B cell (primary cell): ENCODE measurements at regions of chr1 and their contacts with region 1.

Region 1: GRCh38 chr1:223712194-223712849 is at the start of gene CAPN2:
- DNase-seq: peak; percentile 73
- ATAC-seq: peak; percentile 72
- H3K4me3 ChIP-seq: peak within 1 kb of the TSS; percentile 23 to 87 (median 67)
- H3K4me3 Mint-ChIP-seq: peak within 1 kb of the TSS; percentile 88
- H3K27ac ChIP-seq: peak within 1 kb of the TSS; percentile 42 to 68
- H3K27ac Mint-ChIP-seq: peak within 1 kb of the TSS; percentile 84
- H3K4me1 ChIP-seq: peaks cover 47 to 53% of the 10 kb centered on the region in 2 donors
- H3K4me1 Mint-ChIP-seq: peaks cover 51% of the 10 kb centered on the region
- H3K27me3 ChIP-seq: no peaks in the 10 kb centered on the region
- H3K27me3 Mint-ChIP-seq: no peaks in the 10 kb centered on the region
- CTCF ChIP-seq: no peak
- total RNA-seq, gene CAPN2: 79.6 and 83.9 TPM in 2 replicates

Region 2: DNA sequence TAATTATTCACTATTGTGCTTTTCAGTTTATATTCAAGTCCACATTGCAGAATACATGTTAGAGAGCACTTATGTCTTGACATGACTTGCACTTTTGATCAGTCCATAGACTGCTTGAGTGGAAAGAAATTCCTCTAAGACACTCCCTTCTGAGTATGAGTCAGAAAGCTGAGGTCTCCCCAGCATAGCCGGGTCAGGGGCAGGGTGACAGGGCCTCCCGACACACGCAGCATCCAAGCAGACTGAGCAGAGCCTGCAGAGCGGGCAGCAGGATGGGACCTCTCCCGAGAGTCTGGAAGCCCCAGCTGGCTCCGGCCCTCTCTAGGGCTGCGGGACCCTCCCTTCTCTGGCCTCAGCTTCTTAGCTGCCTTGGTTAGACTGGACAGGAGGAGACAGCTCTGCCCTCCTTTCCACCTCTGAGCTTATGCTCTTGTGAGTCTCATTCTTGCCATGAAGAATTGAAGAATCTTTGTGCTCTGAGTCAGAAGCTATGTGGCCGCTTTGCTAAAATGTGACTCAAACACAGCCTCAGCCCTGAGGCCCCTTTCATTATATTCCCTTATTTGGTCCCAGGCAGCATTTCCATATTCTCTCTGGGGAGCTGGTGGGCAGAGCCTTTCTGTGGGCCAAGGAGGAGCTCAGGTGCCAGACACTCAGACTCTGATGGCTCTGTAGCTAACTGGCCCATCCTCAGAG is 11.2 kb before region 1 on chr1:
- CTCF ChIA-PET with region 1: interaction called, 21 read pairs
- POLR2A ChIA-PET with region 1: no interaction called
- intact Hi-C with region 1: loop called (anchors 1 kb)
- DNase-seq: no peak
- ATAC-seq: no peak
- H3K4me3 ChIP-seq: no peak overlapping the region
- H3K4me3 Mint-ChIP-seq: no peak overlapping the region
- H3K27ac ChIP-seq: no peak overlapping the region
- H3K27ac Mint-ChIP-seq: no peak overlapping the region
- H3K4me1 ChIP-seq: peaks cover 4 to 8% of the 10 kb centered on the region in 2 donors
- H3K4me1 Mint-ChIP-seq: peaks cover 8% of the 10 kb centered on the region
- H3K27me3 ChIP-seq: peaks cover 0 to 10% (median 0%) of the 10 kb centered on the region in 4 experiments
- H3K27me3 Mint-ChIP-seq: peaks cover 24% of the 10 kb centered on the region
- CTCF ChIP-seq: no peak

Region 3: DNA sequence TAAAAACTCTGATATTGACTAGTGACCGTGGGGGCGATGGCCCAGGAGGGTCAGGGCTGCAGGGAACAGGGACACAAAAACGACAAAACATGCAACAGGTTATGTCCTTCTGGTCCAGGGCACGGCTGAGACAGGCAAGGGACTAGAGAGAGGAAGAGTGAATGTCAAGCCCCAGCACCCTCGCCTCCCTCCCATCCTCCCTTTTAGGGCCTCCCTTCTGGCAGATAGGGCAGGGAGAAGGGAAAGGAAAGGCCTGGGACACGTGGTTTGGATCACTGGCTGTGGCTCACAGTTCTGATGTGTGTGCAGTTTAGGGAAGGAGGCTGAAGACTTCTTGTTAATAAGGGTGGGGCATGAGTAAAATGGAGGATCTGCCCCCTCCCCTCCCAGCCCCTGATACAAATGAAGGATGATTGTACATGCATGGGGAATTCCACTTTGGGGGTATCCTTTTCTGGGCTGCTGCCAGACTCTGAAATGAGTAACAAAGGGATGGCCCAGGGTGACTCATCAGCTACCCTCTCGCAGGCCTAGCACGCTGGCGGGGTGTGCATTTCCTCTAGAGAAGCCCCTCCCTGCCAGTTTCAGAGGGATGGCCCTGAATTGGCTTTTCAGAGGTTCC is 14.2 kb after region 1 on chr1:
- CTCF ChIA-PET with region 1: interaction called, 5 read pairs
- POLR2A ChIA-PET with region 1: no interaction called
- intact Hi-C with region 1: loop called (anchors 1 kb)
- DNase-seq: peak; percentile 43
- ATAC-seq: peak; percentile 90
- H3K4me3 ChIP-seq: no peak overlapping the region
- H3K4me3 Mint-ChIP-seq: peak overlapping the region; percentile 33
- H3K27ac ChIP-seq: peak overlapping the region; percentile 11 to 37
- H3K27ac Mint-ChIP-seq: peak overlapping the region; percentile 69
- H3K4me1 ChIP-seq: peaks cover 8 to 21% of the 10 kb centered on the region in 2 donors
- H3K4me1 Mint-ChIP-seq: peaks cover 30% of the 10 kb centered on the region
- H3K27me3 ChIP-seq: no peaks in the 10 kb centered on the region
- H3K27me3 Mint-ChIP-seq: no peaks in the 10 kb centered on the region
- CTCF ChIP-seq: no peak

Region 4: DNA sequence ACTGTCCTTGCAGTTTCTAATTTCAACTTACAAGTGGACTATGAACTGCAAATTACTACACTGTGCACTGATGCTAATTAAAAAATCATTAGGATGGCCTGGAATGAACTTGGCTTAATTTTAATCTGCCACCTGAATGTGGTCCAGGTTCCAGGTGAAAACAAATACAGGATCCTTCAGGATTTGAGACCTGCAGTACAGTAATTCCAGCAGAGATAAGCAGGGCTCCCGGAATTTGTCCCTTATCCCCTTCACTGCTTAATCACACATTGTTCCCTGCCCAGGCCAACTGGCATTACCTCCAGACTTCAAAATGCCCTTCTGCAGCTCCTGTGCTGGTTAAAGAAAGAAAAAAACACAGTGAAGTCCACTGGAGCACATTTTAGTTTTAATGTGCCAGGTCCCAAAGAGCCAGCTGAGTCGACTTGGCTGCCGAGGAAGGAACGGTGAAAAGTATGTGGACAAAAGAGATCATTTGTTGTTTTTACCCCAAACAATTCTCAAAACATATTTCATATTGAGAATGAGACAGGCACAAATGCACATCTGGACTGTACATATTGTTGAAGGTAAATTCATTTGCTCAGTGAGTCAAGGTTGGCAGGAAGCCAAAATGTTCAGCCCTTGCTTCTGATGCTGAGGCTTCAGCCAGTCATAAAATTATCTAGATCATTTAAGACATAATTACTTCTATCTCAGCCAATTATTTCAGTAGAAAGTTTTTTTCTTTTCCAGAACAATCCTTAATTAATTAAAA is 499.1 kb after region 1 on chr1:
- CTCF ChIA-PET with region 1: no interaction called
- POLR2A ChIA-PET with region 1: no interaction called
- intact Hi-C with region 1: no loop called
- DNase-seq: no peak
- ATAC-seq: no peak
- H3K4me3 ChIP-seq: no peak overlapping the region
- H3K4me3 Mint-ChIP-seq: no peak overlapping the region
- H3K27ac ChIP-seq: no peak overlapping the region
- H3K27ac Mint-ChIP-seq: no peak overlapping the region
- H3K4me1 ChIP-seq: peaks cover 2 to 26% of the 10 kb centered on the region in 2 donors
- H3K4me1 Mint-ChIP-seq: peaks cover 22% of the 10 kb centered on the region
- H3K27me3 ChIP-seq: no peaks in the 10 kb centered on the region
- H3K27me3 Mint-ChIP-seq: no peaks in the 10 kb centered on the region
- CTCF ChIP-seq: no peak